Activated B cell treated with CpG ODN at 0.5 μM for 24 hours (primary cell): ENCODE measurements at regions of chr11 and their contacts with region 1.

Region 1: DNA sequence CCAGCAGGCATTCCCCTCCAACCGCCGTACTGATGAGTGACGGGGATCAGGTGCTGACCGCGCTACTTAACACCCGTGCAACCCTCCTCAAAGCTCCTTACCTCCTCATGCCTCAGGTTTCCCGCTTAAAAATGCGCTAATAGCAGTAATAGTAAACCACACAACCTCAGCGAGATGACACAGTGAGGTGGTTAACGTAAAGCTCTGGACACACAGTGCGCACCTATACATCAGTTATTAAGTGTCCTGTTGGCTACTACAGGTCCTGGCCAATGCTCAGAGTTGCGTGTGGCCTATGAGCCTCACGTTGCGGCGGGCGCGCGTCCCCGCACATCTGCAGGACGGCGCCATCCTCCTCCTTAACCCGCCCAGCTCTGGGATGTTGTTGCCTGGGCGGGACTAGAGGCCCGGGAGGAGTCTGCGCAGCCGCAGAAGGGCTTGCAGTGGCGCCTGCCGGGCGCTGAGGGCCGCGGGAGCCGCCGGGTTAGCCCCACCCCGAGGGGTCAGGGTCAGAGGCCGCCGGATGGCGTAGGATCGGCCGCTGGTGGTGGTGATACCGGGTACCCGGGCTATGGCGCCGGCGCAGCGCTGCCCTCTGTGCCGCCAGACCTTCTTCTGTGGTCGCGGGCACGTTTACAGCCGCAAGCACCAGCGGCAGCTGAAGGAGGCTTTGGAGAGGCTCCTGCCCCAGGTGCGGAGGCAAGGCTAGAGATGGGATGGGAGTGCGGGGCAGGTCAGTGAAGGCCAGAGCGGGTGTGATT is at the start of gene CENATAC:
- DNase-seq: peak; percentile 91
- ATAC-seq: peak; percentile 95
- H3K4me3 Mint-ChIP-seq: peak within 1 kb of the TSS; percentile 95
- H3K27ac Mint-ChIP-seq: peak within 1 kb of the TSS; percentile 91
- H3K4me1 Mint-ChIP-seq: peaks cover 32% of the 10 kb centered on the region
- H3K27me3 Mint-ChIP-seq: no peaks in the 10 kb centered on the region
- CTCF ChIP-seq: no peak
- total RNA-seq, gene CENATAC: 66.4 and 85.7 TPM in 2 replicates

Region 2: GRCh38 chr11:118572061-118572980 is 425.5 kb before region 1 on chr11 and contains the start of gene ARCN1:
- CTCF ChIA-PET with region 1: no interaction called
- POLR2A ChIA-PET with region 1: interaction called, 3 read pairs
- intact Hi-C with region 1: loop called (anchors 2 kb)
- DNase-seq: peak; percentile 67
- ATAC-seq: peak; percentile 88
- H3K4me3 Mint-ChIP-seq: peak within 1 kb of the TSS; percentile 93
- H3K27ac Mint-ChIP-seq: peak within 1 kb of the TSS; percentile 86
- H3K4me1 Mint-ChIP-seq: peaks cover 45% of the 10 kb centered on the region
- H3K27me3 Mint-ChIP-seq: no peaks in the 10 kb centered on the region
- CTCF ChIP-seq: no peak
- total RNA-seq, gene ARCN1: 91.3 and 94.7 TPM in 2 replicates

Region 3: DNA sequence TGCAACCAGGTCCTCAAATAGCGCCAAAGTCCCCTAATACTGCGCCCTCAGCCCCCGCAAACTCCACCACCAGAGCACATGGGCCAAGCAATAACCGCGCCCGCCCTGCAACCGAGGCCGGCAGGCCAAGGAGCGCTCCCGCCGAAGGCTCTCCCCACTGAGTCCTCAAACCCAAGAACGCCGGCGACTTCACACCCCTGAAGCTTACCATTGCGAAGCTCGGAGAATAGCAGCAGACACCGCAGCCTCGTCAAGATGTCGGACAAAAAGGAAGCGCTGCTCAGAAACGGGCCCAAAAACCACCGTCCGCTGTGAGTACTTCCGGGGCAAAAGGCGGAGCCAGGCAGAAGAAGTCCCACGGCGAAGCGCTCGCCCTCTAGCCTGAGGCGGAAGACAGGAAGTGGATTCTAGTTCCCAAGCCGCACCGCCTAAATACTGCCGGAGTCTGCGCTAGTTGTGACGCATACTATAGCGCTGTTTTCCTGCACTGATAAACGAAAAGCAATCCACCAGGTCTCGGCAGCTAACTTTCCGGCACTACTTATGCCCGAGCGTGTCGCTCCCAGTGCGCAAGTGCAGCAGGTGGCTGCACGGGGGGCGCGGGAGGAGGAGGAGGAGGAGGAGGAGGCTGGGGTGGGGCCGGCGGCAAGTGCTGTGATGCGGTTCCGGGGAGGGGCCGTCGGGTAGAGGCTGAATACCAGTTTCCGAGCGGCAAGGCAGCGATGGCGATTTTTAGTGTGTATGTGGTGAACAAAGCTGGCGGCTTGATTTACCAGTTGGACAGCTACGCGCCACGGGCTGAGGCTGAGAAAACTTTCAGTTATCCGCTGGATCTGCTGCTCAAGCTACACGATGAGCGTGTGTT is 20.5 kb after region 1 on chr11 and contains the starts of genes RPS25 and TRAPPC4:
- CTCF ChIA-PET with region 1: no interaction called
- POLR2A ChIA-PET with region 1: interaction called, 33 read pairs
- intact Hi-C with region 1: loop called (anchors 1 kb)
- DNase-seq: peak; percentile 90
- ATAC-seq: peak; percentile 87
- H3K4me3 Mint-ChIP-seq: peak within 1 kb of the TSS; percentile 99
- H3K27ac Mint-ChIP-seq: peak within 1 kb of the TSS; percentile 100
- H3K4me1 Mint-ChIP-seq: peaks cover 54% of the 10 kb centered on the region
- H3K27me3 Mint-ChIP-seq: no peaks in the 10 kb centered on the region
- CTCF ChIP-seq: no peak
- total RNA-seq, gene RPS25: 2,191 and 2,534 TPM in 2 replicates
- total RNA-seq, gene TRAPPC4: 56.8 and 60.1 TPM in 2 replicates

Region 4: GRCh38 chr11:119057000-119057769 is 59.4 kb after region 1 on chr11 and contains the start of gene HYOU1:
- CTCF ChIA-PET with region 1: no interaction called
- POLR2A ChIA-PET with region 1: interaction called, 8 read pairs
- intact Hi-C with region 1: loop called (anchors 10 kb)
- DNase-seq: peak; percentile 97
- ATAC-seq: peak; percentile 94
- H3K4me3 Mint-ChIP-seq: peak within 1 kb of the TSS; percentile 96
- H3K27ac Mint-ChIP-seq: peak within 1 kb of the TSS; percentile 95
- H3K4me1 Mint-ChIP-seq: peaks cover 40% of the 10 kb centered on the region
- H3K27me3 Mint-ChIP-seq: no peaks in the 10 kb centered on the region
- CTCF ChIP-seq: no peak
- total RNA-seq, gene HYOU1: 120 and 122 TPM in 2 replicates

Region 5: DNA sequence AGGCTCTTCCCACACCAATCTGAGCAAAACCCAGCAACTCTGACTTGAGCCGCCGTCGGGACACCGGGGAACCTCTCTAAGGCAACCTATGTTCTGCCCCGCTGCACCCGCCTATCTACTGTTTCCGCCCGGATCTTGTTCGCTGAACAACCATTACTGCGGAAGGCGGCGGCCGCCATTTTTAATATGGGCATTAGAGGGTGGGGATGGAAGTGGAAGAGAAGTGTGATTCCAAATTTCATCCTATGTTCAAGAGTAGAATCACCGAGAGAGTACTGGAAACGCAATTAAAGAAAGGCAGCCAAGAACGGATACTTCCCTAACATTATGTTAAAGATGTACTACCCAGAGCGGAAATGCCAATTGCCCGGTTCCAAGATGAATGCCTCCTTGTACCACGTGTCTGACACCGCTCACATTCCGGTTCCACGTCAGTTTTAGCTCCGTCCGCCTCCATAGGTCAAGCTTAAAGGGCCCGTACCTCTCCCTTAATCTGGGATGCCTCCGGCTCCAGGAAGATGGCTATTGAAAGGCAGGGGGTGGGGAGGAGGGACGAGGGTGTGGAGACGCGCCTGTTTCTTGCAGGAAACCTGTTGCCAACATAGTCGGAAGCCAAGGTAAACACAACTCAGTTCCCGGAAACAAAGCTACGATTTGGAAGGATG is 104.1 kb after region 1 on chr11 and contains the start of gene DPAGT1:
- CTCF ChIA-PET with region 1: no interaction called
- POLR2A ChIA-PET with region 1: interaction called, 6 read pairs
- intact Hi-C with region 1: loop called (anchors 1 kb)
- DNase-seq: peak; percentile 64
- ATAC-seq: peak; percentile 87
- H3K4me3 Mint-ChIP-seq: peak within 1 kb of the TSS; percentile 96
- H3K27ac Mint-ChIP-seq: peak within 1 kb of the TSS; percentile 96
- H3K4me1 Mint-ChIP-seq: peaks cover 58% of the 10 kb centered on the region
- H3K27me3 Mint-ChIP-seq: no peaks in the 10 kb centered on the region
- CTCF ChIP-seq: no peak
- total RNA-seq, gene DPAGT1: 31.0 and 33.1 TPM in 2 replicates

Region 6: DNA sequence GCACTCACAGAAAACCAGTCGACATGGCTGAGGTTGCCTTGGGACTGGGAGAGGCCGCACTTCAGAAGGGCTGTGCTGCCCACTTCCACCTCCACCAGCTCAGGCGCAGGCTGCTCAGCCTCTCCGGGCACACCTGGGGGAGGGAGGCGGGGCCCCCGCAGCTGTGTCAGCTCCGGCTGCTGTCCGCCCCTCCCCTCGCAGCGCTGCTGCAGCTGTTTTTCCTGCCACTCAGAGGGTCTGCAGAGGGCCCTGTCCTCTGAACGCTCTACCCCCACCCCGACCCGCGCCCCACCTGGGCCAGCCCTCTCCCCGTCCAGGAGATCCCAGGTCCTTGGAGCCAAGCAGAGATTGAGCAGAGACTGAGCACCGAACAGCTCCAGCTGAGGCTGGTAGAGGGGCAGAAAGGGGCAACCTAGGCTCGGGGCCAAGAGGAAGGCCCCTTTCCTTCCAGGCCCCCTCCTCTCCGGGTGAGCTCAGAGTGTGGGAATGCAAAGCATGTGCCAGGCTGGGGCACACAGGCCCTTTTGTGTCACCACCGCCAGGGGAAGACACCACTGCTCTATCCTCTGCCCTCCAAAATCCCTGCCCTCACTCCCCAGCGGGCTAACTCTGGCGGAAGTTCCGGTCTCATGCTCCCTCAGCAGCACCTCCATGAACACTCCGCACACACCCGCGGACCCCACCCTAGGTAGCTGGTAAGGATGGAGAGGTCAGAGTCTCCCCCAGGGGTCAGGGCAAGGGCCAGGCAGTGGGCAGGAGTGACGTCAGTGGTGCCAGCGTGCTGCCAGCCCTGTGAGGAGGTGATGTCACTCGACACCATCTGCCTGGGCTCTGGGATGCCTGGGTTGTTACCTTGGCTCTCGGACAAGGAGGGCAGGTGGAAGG is 317.6 kb after region 1 on chr11:
- CTCF ChIA-PET with region 1: no interaction called
- POLR2A ChIA-PET with region 1: no interaction called
- intact Hi-C with region 1: loop called (anchors 5 kb)
- DNase-seq: no peak
- ATAC-seq: peak; percentile 75
- H3K4me3 Mint-ChIP-seq: peak overlapping the region; percentile 73
- H3K27ac Mint-ChIP-seq: no peak overlapping the region
- H3K4me1 Mint-ChIP-seq: peaks cover 39% of the 10 kb centered on the region
- H3K27me3 Mint-ChIP-seq: peaks cover 26% of the 10 kb centered on the region
- CTCF ChIP-seq: no peak